ENCODE measurements at regions of chr19 and their contacts with region 1.

Region 1: DNA sequence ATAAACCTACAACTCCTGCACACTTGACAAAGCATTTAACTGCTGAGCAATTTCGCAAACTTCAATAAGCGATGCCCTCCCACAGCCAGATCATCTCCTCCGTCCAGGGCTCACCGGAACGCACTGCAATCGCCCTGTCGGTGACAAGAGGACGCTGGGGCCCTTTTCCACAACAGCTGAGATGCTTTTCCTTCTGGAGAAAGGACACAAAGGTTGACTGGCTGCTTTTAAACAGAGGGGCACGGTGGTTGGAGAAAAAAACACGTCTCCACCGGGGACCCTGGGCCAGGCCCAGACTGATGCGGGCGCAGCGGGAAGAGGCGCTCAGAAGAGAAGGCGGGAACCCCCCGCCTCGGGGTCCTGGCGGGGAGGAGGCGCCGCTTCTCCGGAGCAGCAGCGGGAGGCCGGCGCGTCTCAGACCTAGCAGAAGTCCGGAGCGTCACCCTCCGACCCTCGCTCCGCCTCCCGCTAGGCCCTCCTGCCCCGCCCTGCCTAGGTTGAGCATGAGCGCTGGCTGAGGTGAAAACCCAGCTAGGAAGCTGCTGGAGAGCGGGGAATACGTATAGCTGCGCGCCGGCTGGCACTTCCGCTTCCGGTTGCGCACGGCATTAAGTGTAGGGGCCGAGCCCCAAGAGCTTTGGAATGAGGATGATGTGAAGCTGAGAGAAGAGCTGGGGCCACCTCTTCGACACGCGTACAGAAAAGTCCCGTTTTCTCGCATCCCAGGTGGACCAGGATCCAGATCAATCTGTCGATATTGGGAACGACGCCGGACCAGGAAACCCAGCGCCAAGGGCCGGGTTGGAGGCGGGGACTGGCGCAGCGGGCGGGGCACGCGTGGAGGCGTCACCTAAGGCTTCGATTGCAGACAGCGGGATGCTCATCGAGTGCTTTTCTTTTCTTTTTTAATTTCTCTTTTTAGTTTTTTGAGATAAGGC is at the start of gene ZNF846:
- DNase-seq: peak; percentile 96
- ATAC-seq: peak; percentile 98
- H3K4me3 Mint-ChIP-seq: peak within 1 kb of the TSS; percentile 84
- H3K27ac Mint-ChIP-seq: peak within 1 kb of the TSS; percentile 90
- H3K4me1 Mint-ChIP-seq: peaks cover 7% of the 10 kb centered on the region
- H3K27me3 Mint-ChIP-seq: no peaks in the 10 kb centered on the region
- total RNA-seq, gene ZNF846: 5.3 to 6.4 TPM

Region 2: GRCh38 chr19:9323919-9324583 is 444.4 kb before region 1 on chr19 and contains the start of gene ZNF559:
- CTCF ChIA-PET with region 1: no interaction called
- POLR2A ChIA-PET with region 1: no interaction called
- intact Hi-C with region 1: loop called in 1 of 2 experiments (anchors 1 kb)
- DNase-seq: peak; percentile 97
- ATAC-seq: peak; percentile 99
- H3K4me3 Mint-ChIP-seq: peak within 1 kb of the TSS; percentile 84
- H3K27ac Mint-ChIP-seq: peak within 1 kb of the TSS; percentile 96
- H3K4me1 Mint-ChIP-seq: peaks cover 23% of the 10 kb centered on the region
- H3K27me3 Mint-ChIP-seq: no peaks in the 10 kb centered on the region
- total RNA-seq, gene ZNF559: 11.7 to 13.0 TPM

Region 3: DNA sequence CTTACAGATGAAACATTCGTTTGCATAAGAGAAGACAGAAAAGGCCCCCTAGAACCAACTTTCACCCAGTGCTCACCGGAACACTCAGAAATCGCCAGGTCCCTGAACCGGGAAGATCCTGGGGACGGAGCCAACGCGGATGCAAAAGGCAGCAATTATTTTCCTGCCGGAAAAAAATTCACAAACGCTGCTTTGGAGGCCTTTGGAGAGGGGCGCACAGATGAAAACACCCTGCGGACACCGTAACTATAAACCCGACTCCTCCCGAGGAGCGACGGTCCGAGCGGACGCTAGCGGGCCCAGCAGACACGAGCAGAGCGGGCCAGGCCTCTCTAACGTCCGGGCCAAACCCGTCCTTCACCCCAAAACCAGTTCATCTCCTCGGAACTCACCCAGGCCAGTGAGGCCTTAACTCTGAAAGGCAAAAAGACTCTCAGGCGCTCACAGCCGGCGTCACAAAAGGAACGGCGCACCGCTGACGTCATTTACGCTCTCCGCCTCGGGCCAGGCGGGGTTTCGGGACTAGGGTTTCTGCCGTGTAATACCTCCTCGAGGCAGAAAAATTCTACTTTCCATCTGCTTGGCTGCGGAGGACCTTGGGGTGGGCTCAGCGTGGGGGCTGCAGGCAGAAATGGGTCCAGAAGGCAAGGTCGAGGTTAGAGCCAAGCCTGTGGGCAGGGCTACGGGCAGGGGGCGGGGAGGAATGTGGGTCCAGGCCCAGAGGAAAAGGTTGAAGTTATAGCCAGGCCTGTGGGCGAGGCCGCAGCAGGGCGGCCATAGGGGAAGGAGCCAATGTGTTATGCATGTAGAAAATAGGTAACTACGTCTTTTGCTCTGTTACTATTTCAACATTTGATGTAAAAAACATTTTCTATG is 230.0 kb before region 1 on chr19 and contains the start of gene ZNF426:
- CTCF ChIA-PET with region 1: no interaction called
- POLR2A ChIA-PET with region 1: no interaction called
- intact Hi-C with region 1: loop called in 1 of 2 experiments (anchors 5 kb)
- DNase-seq: peak; percentile 95
- ATAC-seq: peak; percentile 97
- H3K4me3 Mint-ChIP-seq: peak within 1 kb of the TSS; percentile 97
- H3K27ac Mint-ChIP-seq: peak within 1 kb of the TSS; percentile 98
- H3K4me1 Mint-ChIP-seq: peaks cover 14% of the 10 kb centered on the region
- H3K27me3 Mint-ChIP-seq: no peaks in the 10 kb centered on the region
- total RNA-seq, gene ZNF426: 10.4 to 12.3 TPM

Region 4: GRCh38 chr19:9674663-9675357 is 93.6 kb before region 1 on chr19 and contains the start of gene ZNF562:
- CTCF ChIA-PET with region 1: interaction called, 3 read pairs
- POLR2A ChIA-PET with region 1: no interaction called
- intact Hi-C with region 1: loop called (anchors 1 to 2 kb)
- DNase-seq: peak; percentile 91
- ATAC-seq: peak; percentile 78
- H3K4me3 Mint-ChIP-seq: peak within 1 kb of the TSS; percentile 94
- H3K27ac Mint-ChIP-seq: peak within 1 kb of the TSS; percentile 97
- H3K4me1 Mint-ChIP-seq: peaks cover 30% of the 10 kb centered on the region
- H3K27me3 Mint-ChIP-seq: no peaks in the 10 kb centered on the region
- total RNA-seq, gene ZNF562: 29.9 to 39.7 TPM

Region 5: GRCh38 chr19:9709305-9709704 is 59.1 kb before region 1 on chr19:
- CTCF ChIA-PET with region 1: no interaction called
- POLR2A ChIA-PET with region 1: no interaction called
- intact Hi-C with region 1: no loop called
- DNase-seq: no peak
- ATAC-seq: no peak
- H3K4me3 Mint-ChIP-seq: no peak overlapping the region
- H3K27ac Mint-ChIP-seq: no peak overlapping the region
- H3K4me1 Mint-ChIP-seq: no peaks in the 10 kb centered on the region
- H3K27me3 Mint-ChIP-seq: peaks cover 2% of the 10 kb centered on the region

Region 6: GRCh38 chr19:9818734-9819589 is 50.5 kb after region 1 on chr19 and contains the start of gene FBXL12:
- CTCF ChIA-PET with region 1: no interaction called
- POLR2A ChIA-PET with region 1: no interaction called
- intact Hi-C with region 1: loop called in 1 of 2 experiments (anchors 1 kb)
- DNase-seq: peak; percentile 100
- ATAC-seq: peak; percentile 92
- H3K4me3 Mint-ChIP-seq: peak within 1 kb of the TSS; percentile 88
- H3K27ac Mint-ChIP-seq: peak within 1 kb of the TSS; percentile 90
- H3K4me1 Mint-ChIP-seq: peaks cover 26% of the 10 kb centered on the region
- H3K27me3 Mint-ChIP-seq: no peaks in the 10 kb centered on the region
- total RNA-seq, gene FBXL12: 19.9 to 22.5 TPM

Region 7: DNA sequence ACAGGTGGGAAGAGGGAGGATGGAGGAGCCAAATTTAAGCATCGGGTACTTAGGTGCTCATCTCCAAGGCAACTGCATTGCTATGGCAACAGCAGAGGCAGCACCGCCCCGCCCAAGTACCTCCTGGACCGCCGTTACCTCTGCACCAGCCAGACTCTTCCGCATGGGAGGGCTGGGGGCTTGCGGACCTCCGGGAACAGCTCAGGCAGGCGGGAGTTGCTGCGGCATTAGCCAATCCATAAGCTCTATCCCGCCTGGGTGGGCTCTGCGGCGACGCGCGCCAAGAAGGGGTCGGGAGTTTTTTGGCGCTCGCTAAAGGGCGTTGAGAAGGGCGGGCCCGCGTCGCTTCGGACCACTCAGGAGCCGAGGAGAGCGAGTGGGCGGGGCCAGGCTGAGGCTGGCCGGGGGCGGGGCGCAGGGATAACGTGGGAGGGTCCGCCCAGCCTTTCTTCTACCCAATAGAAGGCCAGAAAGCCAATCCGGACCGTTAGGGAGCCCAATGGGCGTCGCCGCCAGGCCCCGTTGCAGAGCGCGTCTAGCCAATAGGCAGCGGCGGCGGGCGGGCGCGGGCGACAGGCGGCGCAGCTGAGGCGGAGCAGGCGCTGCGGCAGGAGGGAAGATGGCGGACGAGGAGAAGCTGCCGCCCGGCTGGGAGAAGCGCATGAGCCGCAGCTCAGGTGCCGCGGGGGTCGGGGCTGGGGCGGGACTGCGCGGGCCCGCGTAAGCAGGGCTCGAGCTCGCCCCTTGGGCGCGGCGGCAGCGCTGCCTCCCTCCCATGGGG is 66.5 kb after region 1 on chr19 and contains the start of gene PIN1:
- CTCF ChIA-PET with region 1: interaction called, 3 read pairs
- POLR2A ChIA-PET with region 1: interaction called, 3 read pairs
- intact Hi-C with region 1: loop called in 1 of 2 experiments (anchors 1 kb)
- DNase-seq: peak; percentile 100
- ATAC-seq: peak; percentile 99
- H3K4me3 Mint-ChIP-seq: peak within 1 kb of the TSS; percentile 86
- H3K27ac Mint-ChIP-seq: peak within 1 kb of the TSS; percentile 88
- H3K4me1 Mint-ChIP-seq: peaks cover 20% of the 10 kb centered on the region
- H3K27me3 Mint-ChIP-seq: no peaks in the 10 kb centered on the region
- total RNA-seq, gene PIN1: 70.4 to 74.2 TPM

Region 8: GRCh38 chr19:9917321-9917720 is 148.9 kb after region 1 on chr19:
- CTCF ChIA-PET with region 1: no interaction called
- POLR2A ChIA-PET with region 1: no interaction called
- intact Hi-C with region 1: no loop called
- DNase-seq: peak; percentile 33
- ATAC-seq: peak; percentile 39
- H3K4me3 Mint-ChIP-seq: no peak overlapping the region
- H3K27ac Mint-ChIP-seq: no peak overlapping the region
- H3K4me1 Mint-ChIP-seq: peaks cover 3% of the 10 kb centered on the region
- H3K27me3 Mint-ChIP-seq: peaks cover 26% of the 10 kb centered on the region